Activated B cell treated with CpG ODN at 0.5 μM for 24 hours (primary cell): ENCODE measurements at regions of chr7 and their contacts with region 1.

Region 1: DNA sequence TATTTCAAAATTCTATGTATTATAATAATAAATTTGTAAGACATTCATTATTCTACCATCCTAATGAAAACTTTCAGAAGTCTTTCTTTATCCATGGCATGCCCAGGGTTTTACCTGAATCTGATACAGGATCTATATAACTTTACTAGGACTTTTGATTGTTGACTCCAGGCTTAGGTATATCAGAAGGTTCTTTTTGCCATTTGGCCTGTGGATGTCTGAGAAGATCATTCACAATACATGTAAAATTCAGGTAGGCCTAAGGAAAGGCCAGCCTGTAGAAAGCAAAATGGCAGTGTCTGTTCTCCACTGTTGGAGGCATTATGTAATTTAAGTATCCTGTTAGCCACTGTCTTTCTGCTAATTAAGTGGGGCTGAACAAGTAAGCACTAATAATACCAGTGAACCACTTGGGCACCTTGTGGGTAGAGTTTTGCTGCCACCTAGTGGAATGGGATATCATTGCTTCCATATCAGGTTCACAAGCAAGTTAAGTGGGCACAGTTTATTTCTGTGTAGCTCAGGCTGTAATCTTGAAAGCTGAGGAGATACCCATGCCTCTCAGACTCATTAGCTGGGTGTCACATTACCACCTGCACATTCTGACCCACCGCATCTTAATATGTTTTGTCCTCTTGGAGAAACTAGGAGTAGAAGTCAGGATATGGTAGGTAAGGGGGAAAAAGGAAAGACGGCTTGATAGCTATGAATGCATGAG is 105.5 kb downstream of the SEPTIN7 start:
- DNase-seq: no peak
- ATAC-seq: peak; percentile 96
- H3K4me3 Mint-ChIP-seq: no peak overlapping the region
- H3K27ac Mint-ChIP-seq: peak overlapping the region; percentile 41
- H3K4me1 Mint-ChIP-seq: peaks cover 3% of the 10 kb centered on the region
- H3K27me3 Mint-ChIP-seq: no peaks in the 10 kb centered on the region
- CTCF ChIP-seq: peak; percentile 11

Region 2: DNA sequence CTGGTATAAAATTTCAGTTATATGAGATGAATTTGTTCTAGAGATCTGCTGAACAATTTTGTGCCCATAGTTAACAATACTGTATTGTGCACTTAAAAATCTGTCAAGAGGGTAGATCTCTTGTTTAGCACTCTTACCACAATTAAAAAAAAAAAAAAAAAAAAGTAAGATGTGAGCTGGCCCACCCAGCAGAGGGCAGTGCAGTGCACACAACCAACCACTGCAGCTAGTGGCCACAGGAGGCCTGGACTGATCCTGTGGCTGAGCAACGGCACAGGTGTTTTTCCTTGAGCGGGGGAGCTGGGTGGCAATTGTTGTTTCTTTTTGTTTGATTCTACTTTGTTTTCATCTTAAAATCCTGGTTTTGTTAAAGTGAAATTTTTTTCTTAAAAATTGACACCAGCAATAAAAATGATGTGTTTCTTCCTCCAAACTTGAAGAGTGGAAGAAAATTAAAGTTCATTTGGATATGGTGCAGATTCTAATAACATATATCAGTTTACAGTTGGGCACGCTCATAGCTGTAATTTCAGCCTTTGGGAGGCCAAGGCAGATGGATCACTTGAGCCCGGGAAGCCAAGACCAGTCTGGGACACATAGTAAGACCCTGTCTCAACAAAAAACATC is 481.4 kb before region 1 on chr7:
- CTCF ChIA-PET with region 1: interaction called, 4 read pairs
- POLR2A ChIA-PET with region 1: no interaction called
- intact Hi-C with region 1: loop called (anchors 1 kb)
- DNase-seq: peak; percentile 28
- ATAC-seq: peak; percentile 72
- H3K4me3 Mint-ChIP-seq: no peak overlapping the region
- H3K27ac Mint-ChIP-seq: no peak overlapping the region
- H3K4me1 Mint-ChIP-seq: peaks cover 3% of the 10 kb centered on the region
- H3K27me3 Mint-ChIP-seq: peaks cover 16% of the 10 kb centered on the region
- CTCF ChIP-seq: no peak

Region 3: GRCh38 chr7:35537067-35538023 is 369.0 kb before region 1 on chr7:
- CTCF ChIA-PET with region 1: no interaction called
- POLR2A ChIA-PET with region 1: no interaction called
- intact Hi-C with region 1: loop called (anchors 1 kb)
- DNase-seq: peak; percentile 76
- ATAC-seq: peak; percentile 97
- H3K4me3 Mint-ChIP-seq: peak overlapping the region; percentile 84
- H3K27ac Mint-ChIP-seq: no peak overlapping the region
- H3K4me1 Mint-ChIP-seq: peaks cover 4% of the 10 kb centered on the region
- H3K27me3 Mint-ChIP-seq: peaks cover 23% of the 10 kb centered on the region
- CTCF ChIP-seq: peak; percentile 82

Region 4: DNA sequence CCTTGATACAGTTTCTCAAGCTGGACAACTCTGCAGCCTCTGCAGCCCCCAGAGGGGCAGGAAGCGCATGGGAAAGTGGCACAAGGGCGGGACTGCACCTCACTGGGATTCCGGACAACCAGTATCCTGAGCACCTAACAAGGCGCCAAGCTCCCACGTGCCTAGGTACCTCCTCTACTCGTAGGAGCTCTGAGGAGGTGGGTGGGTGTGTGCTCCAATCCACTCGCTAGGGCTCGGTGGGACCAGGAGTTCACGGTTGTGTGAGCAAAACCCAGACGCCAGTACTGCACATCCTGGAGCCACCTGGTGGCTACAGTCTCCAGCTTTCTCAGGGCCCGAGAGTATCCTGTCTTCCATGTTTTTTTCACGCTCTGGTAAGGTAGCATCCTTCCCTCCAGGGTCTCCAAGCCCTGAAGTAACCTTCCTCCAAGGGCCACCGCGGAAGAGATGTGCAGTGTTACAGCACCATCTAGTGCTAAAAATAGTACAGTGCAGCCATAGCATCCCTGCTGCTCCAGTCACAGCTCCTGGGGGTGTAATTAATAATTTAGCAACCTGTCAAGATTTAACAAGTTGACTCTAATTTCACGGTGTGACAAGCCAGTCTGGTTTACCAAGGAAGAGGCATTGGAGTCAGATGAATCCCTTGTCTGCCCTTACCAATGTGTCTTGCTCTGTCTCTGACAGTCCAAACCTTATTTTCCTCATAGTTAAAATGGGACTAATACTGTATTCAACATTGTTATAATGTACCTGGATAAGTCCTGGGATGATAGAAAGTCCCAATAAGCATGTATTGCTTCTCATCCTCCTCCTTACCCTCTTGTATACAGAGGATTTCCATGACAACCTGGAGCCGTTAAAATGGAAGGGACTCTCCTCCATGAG is 281.8 kb before region 1 on chr7:
- CTCF ChIA-PET with region 1: interaction called, 7 read pairs
- POLR2A ChIA-PET with region 1: no interaction called
- intact Hi-C with region 1: loop called (anchors 1 kb)
- DNase-seq: peak; percentile 18
- ATAC-seq: peak; percentile 86
- H3K4me3 Mint-ChIP-seq: no peak overlapping the region
- H3K27ac Mint-ChIP-seq: no peak overlapping the region
- H3K4me1 Mint-ChIP-seq: peaks cover 2% of the 10 kb centered on the region
- H3K27me3 Mint-ChIP-seq: no peaks in the 10 kb centered on the region
- CTCF ChIP-seq: peak; percentile 81

Region 5: DNA sequence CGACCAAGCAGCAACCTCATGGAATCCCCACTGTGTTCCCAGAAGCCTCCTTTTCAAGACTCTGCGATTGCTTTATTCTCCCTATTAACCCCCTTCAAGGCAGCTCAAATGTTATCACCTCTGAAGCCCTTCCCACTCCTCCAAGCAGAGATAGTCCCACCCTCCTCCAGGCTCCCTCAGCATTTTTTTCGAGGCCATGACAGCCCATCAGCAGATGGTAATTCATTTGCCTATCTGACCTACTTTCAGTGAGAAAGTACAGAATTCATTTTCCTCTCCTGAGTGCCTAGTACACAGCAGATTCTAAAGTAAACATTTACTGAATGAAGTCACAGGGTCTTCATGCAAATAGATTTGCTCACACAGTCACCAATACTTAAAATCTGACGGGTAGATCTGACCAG is 259.2 kb before region 1 on chr7:
- CTCF ChIA-PET with region 1: interaction called, 5 read pairs
- POLR2A ChIA-PET with region 1: no interaction called
- intact Hi-C with region 1: loop called (anchors 5 kb)
- DNase-seq: no peak
- ATAC-seq: no peak
- H3K4me3 Mint-ChIP-seq: peak overlapping the region; percentile 20
- H3K27ac Mint-ChIP-seq: no peak overlapping the region
- H3K4me1 Mint-ChIP-seq: peaks cover 42% of the 10 kb centered on the region
- H3K27me3 Mint-ChIP-seq: no peaks in the 10 kb centered on the region
- CTCF ChIP-seq: no peak

Region 6: DNA sequence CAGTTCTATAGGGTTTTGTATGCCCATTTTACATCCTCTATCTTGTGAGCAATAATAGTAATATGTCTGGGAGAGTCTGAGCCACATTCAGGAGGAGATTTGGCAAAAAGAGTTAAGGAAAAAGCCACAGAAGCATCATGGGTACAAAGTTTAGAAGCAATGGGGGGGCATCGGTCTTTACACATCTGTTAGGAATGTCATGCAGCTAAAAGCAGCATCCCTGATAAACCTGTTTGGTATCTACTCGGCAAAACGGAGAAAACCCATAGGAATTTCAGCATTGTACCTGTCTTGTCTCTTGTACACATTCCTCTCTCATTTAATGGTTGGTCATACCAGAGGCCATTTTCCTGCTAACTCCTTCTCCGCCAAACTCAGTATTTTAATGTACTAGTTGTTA is 198.9 kb before region 1 on chr7:
- CTCF ChIA-PET with region 1: interaction called, 36 read pairs
- POLR2A ChIA-PET with region 1: no interaction called
- intact Hi-C with region 1: loop called (anchors 1 kb)
- DNase-seq: no peak
- ATAC-seq: no peak
- H3K4me3 Mint-ChIP-seq: no peak overlapping the region
- H3K27ac Mint-ChIP-seq: no peak overlapping the region
- H3K4me1 Mint-ChIP-seq: peaks cover 11% of the 10 kb centered on the region
- H3K27me3 Mint-ChIP-seq: no peaks in the 10 kb centered on the region
- CTCF ChIP-seq: no peak

Region 7: DNA sequence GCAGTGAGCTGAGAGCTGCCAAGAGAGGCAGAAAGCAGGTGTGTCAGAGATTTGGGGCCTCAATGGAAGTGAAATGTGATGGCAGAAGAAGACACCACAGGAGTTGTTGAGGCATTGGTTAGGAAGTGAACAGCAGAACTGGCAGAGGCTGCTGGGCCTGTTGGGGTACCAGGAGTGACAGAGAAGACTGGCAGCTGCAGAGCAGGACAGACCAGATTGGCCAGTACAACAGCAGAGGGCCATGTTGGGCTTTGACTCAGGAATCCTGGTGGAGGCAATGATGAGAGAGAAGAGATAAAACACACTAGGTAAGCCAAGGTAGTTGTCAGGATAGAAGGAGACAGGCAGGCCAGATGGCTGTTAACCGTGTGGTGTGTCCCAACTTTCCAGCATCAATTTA is 191.5 kb before region 1 on chr7:
- CTCF ChIA-PET with region 1: interaction called, 36 read pairs
- POLR2A ChIA-PET with region 1: interaction called, 4 read pairs
- intact Hi-C with region 1: no loop called
- DNase-seq: no peak
- ATAC-seq: peak; percentile 57
- H3K4me3 Mint-ChIP-seq: no peak overlapping the region
- H3K27ac Mint-ChIP-seq: peak overlapping the region; percentile 59
- H3K4me1 Mint-ChIP-seq: peaks cover 31% of the 10 kb centered on the region
- H3K27me3 Mint-ChIP-seq: no peaks in the 10 kb centered on the region
- CTCF ChIP-seq: no peak